Activated B cell treated with CpG ODN at 0.5 μM for 24 hours (primary cell): ENCODE measurements at regions of chr19 and their contacts with region 1.

Region 1: DNA sequence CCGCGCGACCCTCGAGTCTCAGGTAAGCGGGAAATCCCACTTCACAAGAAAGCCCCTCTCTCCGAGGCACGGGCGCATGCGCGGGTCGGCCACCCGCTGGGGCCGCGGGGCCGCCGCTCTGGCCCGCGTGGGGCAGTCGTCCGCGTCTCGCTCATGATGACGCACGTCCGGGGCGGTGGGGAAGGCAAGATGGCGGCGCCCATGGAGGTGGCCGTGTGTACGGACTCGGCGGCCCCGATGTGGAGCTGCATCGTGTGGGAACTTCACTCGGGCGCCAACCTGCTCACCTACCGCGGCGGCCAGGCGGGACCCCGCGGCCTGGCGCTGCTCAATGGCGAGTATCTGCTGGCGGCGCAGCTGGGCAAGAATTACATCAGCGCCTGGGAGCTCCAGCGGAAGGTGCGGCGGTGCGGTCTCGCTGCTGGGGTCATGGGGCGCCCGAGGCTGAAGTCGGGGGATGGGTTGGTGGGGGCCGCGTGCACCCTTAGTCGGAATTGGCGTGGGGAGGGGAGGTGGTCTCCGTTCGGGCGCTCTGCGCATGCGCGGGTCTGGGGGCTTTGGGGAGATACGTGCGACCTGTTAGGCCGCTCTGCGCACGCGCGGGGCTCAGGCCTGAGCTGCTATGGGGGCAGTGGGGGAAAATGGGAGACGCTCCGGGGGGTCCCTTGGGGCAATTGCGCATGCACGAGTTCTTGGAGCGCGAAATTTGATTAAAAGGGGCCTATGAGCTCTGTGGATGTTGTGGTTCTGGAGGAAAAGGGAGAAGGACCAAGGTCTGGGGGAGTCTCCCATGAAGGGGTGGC is at the start of gene WDR18:
- DNase-seq: peak; percentile 89
- ATAC-seq: peak; percentile 89
- H3K4me3 Mint-ChIP-seq: peak within 1 kb of the TSS; percentile 92
- H3K27ac Mint-ChIP-seq: peak within 1 kb of the TSS; percentile 89
- H3K4me1 Mint-ChIP-seq: peaks cover 18% of the 10 kb centered on the region
- H3K27me3 Mint-ChIP-seq: no peaks in the 10 kb centered on the region
- CTCF ChIP-seq: no peak
- total RNA-seq, gene WDR18: 66.5 and 84.7 TPM in 2 replicates

Region 2: DNA sequence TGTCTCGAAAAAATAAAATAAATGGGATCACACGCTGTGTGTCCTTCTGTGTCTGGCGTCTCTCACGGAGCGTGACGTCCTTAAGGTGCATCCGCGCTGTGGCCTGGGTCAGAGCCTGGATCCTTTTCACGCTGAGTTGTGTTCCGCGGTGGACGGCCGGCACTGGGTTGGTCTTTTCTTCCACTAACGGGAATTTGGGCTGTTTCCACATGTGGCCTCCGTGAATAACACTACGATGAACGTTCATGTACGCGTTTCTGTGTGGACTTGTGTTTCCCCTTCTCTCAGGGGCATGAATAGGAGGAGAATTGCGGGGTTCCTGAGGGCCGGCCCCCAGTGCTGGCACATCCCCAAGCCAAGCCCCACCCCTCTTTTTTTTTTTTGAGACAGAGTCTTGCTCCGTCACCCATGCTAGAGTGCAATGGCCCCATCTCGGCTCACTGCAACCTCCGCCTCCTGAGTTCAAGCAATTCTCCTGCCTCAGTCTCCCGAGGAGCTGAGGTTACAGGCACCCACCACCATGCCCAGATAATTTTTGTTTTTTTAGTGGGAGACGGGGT is 193.3 kb before region 1 on chr19:
- CTCF ChIA-PET with region 1: no interaction called
- POLR2A ChIA-PET with region 1: no interaction called
- intact Hi-C with region 1: no loop called
- DNase-seq: no peak
- ATAC-seq: no peak
- H3K4me3 Mint-ChIP-seq: no peak overlapping the region
- H3K27ac Mint-ChIP-seq: no peak overlapping the region
- H3K4me1 Mint-ChIP-seq: no peaks in the 10 kb centered on the region
- H3K27me3 Mint-ChIP-seq: peaks cover 12% of the 10 kb centered on the region
- CTCF ChIP-seq: no peak

Region 3: DNA sequence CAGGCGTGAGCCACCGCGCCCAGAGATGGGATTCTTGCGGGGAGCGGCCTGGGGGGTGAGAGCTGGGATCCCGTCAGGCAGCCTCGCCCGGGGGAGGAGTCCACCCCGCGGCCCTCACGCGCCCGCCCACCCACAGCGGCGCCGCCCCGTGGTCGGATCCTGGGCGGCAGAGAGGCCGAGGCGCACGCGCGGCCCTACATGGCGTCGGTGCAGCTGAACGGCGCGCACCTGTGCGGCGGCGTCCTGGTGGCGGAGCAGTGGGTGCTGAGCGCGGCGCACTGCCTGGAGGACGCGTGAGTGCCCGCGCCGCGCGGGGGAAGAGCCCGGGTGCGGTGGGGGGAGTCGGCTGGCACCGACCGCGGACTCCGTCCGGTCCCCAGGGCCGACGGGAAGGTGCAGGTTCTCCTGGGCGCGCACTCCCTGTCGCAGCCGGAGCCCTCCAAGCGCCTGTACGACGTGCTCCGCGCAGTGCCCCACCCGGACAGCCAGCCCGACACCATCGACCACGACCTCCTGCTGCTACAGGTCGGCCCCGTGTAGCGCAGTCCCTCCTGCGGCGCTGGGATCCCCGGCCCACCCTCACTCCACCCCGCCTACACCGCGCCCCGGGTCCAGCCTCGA is 123.8 kb before region 1 on chr19:
- CTCF ChIA-PET with region 1: interaction called, 34 read pairs
- POLR2A ChIA-PET with region 1: interaction called, 10 read pairs
- intact Hi-C with region 1: loop called (anchors 1 kb)
- DNase-seq: peak; percentile 63
- ATAC-seq: peak; percentile 51
- H3K4me3 Mint-ChIP-seq: peak overlapping the region; percentile 28
- H3K27ac Mint-ChIP-seq: no peak overlapping the region
- H3K4me1 Mint-ChIP-seq: peaks cover 19% of the 10 kb centered on the region
- H3K27me3 Mint-ChIP-seq: peaks cover 8% of the 10 kb centered on the region
- CTCF ChIP-seq: no peak

Region 4: DNA sequence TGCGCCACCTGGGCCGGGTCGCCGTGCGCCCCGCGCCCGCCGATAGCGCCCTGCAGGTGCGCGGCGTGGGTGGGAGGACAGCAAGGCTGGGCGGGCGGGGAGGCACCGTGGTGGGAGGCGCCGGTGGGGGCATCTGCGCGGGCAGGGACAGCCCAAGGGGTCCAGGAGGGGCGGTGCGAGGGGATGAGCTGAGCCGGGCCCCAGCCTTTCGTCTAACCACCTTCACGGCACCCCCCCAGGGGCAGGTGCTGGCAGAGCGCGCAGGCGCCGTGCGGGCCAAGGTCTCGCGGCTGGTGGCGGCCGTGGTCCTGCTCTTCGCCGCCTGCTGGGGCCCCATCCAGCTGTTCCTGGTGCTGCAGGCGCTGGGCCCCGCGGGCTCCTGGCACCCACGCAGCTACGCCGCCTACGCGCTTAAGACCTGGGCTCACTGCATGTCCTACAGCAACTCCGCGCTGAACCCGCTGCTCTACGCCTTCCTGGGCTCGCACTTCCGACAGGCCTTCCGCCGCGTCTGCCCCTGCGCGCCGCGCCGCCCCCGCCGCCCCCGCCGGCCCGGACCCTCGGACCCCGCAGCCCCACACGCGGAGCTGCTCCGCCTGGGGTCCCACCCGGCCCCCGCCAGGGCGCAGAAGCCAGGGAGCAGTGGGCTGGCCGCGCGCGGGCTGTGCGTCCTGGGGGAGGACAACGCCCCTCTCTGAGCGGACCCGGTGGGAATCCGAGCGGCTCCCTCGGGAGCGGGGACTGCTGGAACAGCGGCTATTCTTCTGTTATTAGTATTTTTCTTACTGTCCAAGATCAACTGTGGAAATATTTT is 64.1 kb before region 1 on chr19:
- CTCF ChIA-PET with region 1: interaction called, 37 read pairs
- POLR2A ChIA-PET with region 1: interaction called, 67 read pairs
- intact Hi-C with region 1: loop called (anchors 1 kb)
- DNase-seq: peak; percentile 70
- ATAC-seq: peak; percentile 38
- H3K4me3 Mint-ChIP-seq: peak overlapping the region; percentile 72
- H3K27ac Mint-ChIP-seq: no peak overlapping the region
- H3K4me1 Mint-ChIP-seq: peaks cover 34% of the 10 kb centered on the region
- H3K27me3 Mint-ChIP-seq: no peaks in the 10 kb centered on the region
- CTCF ChIP-seq: no peak

Region 5: GRCh38 chr19:940591-941291 is 43.6 kb before region 1 on chr19:
- CTCF ChIA-PET with region 1: no interaction called
- POLR2A ChIA-PET with region 1: interaction called, 17 read pairs
- intact Hi-C with region 1: no loop called
- DNase-seq: peak; percentile 73
- ATAC-seq: peak; percentile 72
- H3K4me3 Mint-ChIP-seq: peak overlapping the region; percentile 75
- H3K27ac Mint-ChIP-seq: peak overlapping the region; percentile 80
- H3K4me1 Mint-ChIP-seq: peaks cover 42% of the 10 kb centered on the region
- H3K27me3 Mint-ChIP-seq: no peaks in the 10 kb centered on the region
- CTCF ChIP-seq: no peak

Region 6: DNA sequence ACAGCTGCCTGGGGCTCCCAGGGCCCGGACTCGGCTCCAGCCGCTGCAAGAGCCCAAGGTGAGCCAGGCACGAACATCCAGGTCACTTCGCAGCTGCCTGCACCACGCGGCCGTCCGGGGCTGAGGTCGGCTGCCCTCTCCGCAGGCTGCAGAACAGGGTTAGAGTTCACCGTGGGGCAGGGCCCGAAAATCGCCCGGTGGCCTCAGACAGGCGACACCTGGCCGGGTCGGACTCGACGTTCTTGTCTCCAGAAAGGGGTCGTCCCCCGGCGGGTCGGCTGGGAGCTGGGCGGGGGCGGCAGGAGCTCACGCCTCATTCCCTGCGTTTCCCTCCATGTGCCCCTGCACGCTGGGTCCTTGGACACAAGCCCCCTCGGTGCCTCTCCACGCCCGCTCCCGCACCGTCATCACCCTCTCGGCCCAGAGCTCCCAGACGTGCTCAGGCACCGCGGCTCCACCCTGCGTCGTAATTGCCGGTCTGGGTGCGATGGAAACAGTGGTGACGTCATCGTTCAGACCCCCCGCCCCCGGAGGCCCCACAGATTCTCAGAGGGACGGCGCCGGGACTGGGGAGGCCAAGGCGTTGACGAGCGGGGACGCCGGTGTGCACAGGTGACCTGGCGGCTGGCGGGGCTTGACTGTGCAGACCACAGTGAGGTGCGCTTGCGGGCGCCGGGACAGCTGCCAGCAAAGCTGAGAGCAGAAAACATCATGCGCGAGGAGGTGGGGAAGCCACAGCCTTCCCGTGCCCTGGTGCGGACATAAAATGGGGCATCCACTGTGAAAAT is 11.9 kb after region 1 on chr19:
- CTCF ChIA-PET with region 1: interaction called, 3 read pairs
- POLR2A ChIA-PET with region 1: interaction called, 21 read pairs
- intact Hi-C with region 1: loop called (anchors 1 kb)
- DNase-seq: peak; percentile 54
- ATAC-seq: peak; percentile 44
- H3K4me3 Mint-ChIP-seq: peak overlapping the region; percentile 41
- H3K27ac Mint-ChIP-seq: peak overlapping the region; percentile 35
- H3K4me1 Mint-ChIP-seq: peaks cover 18% of the 10 kb centered on the region
- H3K27me3 Mint-ChIP-seq: peaks cover 27% of the 10 kb centered on the region
- CTCF ChIP-seq: no peak

Region 7: DNA sequence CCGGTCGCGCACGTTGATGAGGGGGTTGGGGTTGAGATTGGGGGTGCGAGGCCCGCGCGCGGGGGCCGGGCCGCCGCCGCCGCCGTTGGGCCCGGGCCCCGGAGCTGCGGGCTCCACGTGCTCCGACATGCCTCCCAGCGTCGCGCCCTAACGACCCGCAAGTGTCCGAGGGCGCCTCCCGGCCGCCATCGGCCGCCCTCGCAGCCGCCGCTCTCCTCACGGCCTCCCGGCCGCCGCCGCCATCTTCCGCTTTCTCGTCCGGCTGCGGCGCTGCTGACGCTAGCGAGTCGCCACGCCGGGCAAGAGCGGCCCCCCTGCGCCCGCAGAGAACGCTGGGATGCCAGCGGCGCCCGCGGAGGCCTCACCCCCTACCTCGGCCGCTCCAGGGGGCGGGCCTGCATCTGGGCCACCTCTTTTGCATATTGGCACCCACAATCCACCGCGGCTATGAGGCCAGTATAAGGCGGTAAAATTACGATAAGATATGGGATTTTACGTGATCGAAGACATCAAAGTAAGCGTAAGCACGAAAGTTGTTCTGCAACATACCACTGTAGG is 36.6 kb after region 1 on chr19 and contains the start of gene TMEM259:
- CTCF ChIA-PET with region 1: no interaction called
- POLR2A ChIA-PET with region 1: interaction called, 6 read pairs
- intact Hi-C with region 1: loop called (anchors 1 kb)
- DNase-seq: peak; percentile 95
- ATAC-seq: peak; percentile 87
- H3K4me3 Mint-ChIP-seq: peak within 1 kb of the TSS; percentile 87
- H3K27ac Mint-ChIP-seq: peak within 1 kb of the TSS; percentile 99
- H3K4me1 Mint-ChIP-seq: peaks cover 53% of the 10 kb centered on the region
- H3K27me3 Mint-ChIP-seq: no peaks in the 10 kb centered on the region
- CTCF ChIP-seq: no peak
- total RNA-seq, gene TMEM259: 223 and 257 TPM in 2 replicates

Region 8: GRCh38 chr19:1141944-1142343 is 157.6 kb after region 1 on chr19:
- CTCF ChIA-PET with region 1: no interaction called
- POLR2A ChIA-PET with region 1: no interaction called
- intact Hi-C with region 1: no loop called
- DNase-seq: no peak
- ATAC-seq: no peak
- H3K4me3 Mint-ChIP-seq: no peak overlapping the region
- H3K27ac Mint-ChIP-seq: no peak overlapping the region
- H3K4me1 Mint-ChIP-seq: no peaks in the 10 kb centered on the region
- H3K27me3 Mint-ChIP-seq: no peaks in the 10 kb centered on the region
- CTCF ChIP-seq: no peak